Activated CD4-positive, alpha-beta memory T cell treated with anti-CD3 and anti-CD28 coated beads for 36 hours (primary cell): ENCODE measurements at regions of chr13 and their contacts with region 1.

Region 1: GRCh38 chr13:99980201-99980823 is 1.3 kb upstream of the ZIC2 start:
- DNase-seq: peak; percentile 66
- H3K4me3 Mint-ChIP-seq: no peak overlapping the region
- H3K27ac Mint-ChIP-seq: no peak overlapping the region
- H3K4me1 Mint-ChIP-seq: peaks cover 18% of the 10 kb centered on the region
- H3K27me3 Mint-ChIP-seq: peaks cover 66% of the 10 kb centered on the region

Region 2: GRCh38 chr13:99941086-99941485 is 39.2 kb before region 1 on chr13:
- CTCF ChIA-PET with region 1: no interaction called
- POLR2A ChIA-PET with region 1: no interaction called
- intact Hi-C with region 1: no loop called
- DNase-seq: no peak
- H3K4me3 Mint-ChIP-seq: no peak overlapping the region
- H3K27ac Mint-ChIP-seq: no peak overlapping the region
- H3K4me1 Mint-ChIP-seq: no peaks in the 10 kb centered on the region
- H3K27me3 Mint-ChIP-seq: peaks cover 36% of the 10 kb centered on the region

Region 3: GRCh38 chr13:99959538-99960230 is 20.6 kb before region 1 on chr13:
- CTCF ChIA-PET with region 1: no interaction called
- POLR2A ChIA-PET with region 1: no interaction called
- intact Hi-C with region 1: loop called (anchors 2 kb)
- DNase-seq: no peak
- H3K4me3 Mint-ChIP-seq: peak overlapping the region; percentile 12
- H3K27ac Mint-ChIP-seq: no peak overlapping the region
- H3K4me1 Mint-ChIP-seq: peaks cover 29% of the 10 kb centered on the region
- H3K27me3 Mint-ChIP-seq: peaks cover 73% of the 10 kb centered on the region

Region 4: GRCh38 chr13:99969919-99970621 is 10.2 kb before region 1 on chr13:
- CTCF ChIA-PET with region 1: interaction called, 3 read pairs
- POLR2A ChIA-PET with region 1: no interaction called
- intact Hi-C with region 1: loop called (anchors 1 kb)
- DNase-seq: peak; percentile 56
- H3K4me3 Mint-ChIP-seq: peak overlapping the region; percentile 65
- H3K27ac Mint-ChIP-seq: peak overlapping the region; percentile 69
- H3K4me1 Mint-ChIP-seq: peaks cover 17% of the 10 kb centered on the region
- H3K27me3 Mint-ChIP-seq: peaks cover 71% of the 10 kb centered on the region

Region 5: GRCh38 chr13:99995589-99996380 is 15.5 kb after region 1 on chr13:
- CTCF ChIA-PET with region 1: no interaction called
- POLR2A ChIA-PET with region 1: no interaction called
- intact Hi-C with region 1: loop called (anchors 2 kb)
- DNase-seq: no peak
- H3K4me3 Mint-ChIP-seq: no peak overlapping the region
- H3K27ac Mint-ChIP-seq: peak overlapping the region; percentile 36
- H3K4me1 Mint-ChIP-seq: peaks cover under 1% of the 10 kb centered on the region
- H3K27me3 Mint-ChIP-seq: peaks cover 73% of the 10 kb centered on the region

Region 6: GRCh38 chr13:100214886-100215285 is 234.6 kb after region 1 on chr13:
- CTCF ChIA-PET with region 1: no interaction called
- POLR2A ChIA-PET with region 1: no interaction called
- intact Hi-C with region 1: no loop called
- DNase-seq: no peak
- H3K4me3 Mint-ChIP-seq: no peak overlapping the region
- H3K27ac Mint-ChIP-seq: no peak overlapping the region
- H3K4me1 Mint-ChIP-seq: peaks cover 5% of the 10 kb centered on the region
- H3K27me3 Mint-ChIP-seq: no peaks in the 10 kb centered on the region